Activated CD8-positive, alpha-beta T cell treated with anti-CD3 and anti-CD28 coated beads, Interleukin-2, amount 10 ng/mL, durations not matched to agents 7 days and 5 days (primary cell): ENCODE measurements at regions of chr19 and their contacts with region 1.

Region 1: DNA sequence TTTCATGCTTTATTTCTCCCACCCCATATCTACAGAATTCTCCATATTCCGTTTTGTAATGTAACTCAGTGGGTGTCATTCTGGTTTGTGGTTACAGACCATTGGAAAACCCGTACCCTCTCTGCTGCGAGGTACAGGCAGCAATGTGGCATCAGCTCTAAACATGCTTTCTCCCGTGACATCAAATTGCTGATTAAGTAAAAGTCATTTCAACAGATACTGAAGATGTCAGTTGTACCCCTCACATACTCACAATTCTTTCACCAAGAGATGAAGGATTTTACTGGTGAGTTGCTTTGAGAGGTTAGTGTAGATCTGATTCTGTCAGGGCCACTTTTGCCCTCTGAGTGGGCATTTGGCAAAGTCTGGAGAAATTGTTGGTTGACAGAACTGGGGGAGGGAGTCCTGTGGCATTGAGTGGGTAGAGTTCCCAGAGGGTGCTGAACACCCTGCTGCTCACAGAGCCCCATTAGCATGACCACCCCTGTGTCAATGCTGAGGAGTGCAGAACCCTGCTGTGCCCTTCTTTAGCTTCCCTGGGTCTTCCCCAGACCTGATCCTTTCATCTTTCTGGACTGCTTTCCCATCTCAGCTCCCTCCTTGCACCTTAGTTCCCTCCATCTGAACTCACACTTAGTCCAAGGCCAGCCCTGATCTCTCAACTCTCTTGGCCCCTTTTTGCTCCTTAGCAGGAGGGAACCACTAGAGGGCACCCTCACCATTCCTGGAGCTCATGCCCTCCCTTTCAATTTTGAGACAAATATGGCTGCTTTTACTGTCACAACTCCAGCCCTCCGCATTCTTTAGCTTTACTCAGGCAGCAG is 39.9 kb upstream of the CEACAM8 start:
- DNase-seq: peak; percentile 58
- ATAC-seq: peak; percentile 61
- H3K4me3 Mint-ChIP-seq: no peak overlapping the region
- H3K27ac Mint-ChIP-seq: no peak overlapping the region
- H3K4me1 Mint-ChIP-seq: no peaks in the 10 kb centered on the region
- H3K27me3 Mint-ChIP-seq: peaks cover 5% of the 10 kb centered on the region

Region 2: GRCh38 chr19:42480335-42481095 is 154.1 kb before region 1 on chr19:
- CTCF ChIA-PET with region 1: no interaction called
- POLR2A ChIA-PET with region 1: no interaction called
- DNase-seq: peak; percentile 50
- ATAC-seq: peak; percentile 58
- H3K4me3 Mint-ChIP-seq: peak overlapping the region; percentile 48
- H3K27ac Mint-ChIP-seq: peak overlapping the region; percentile 75
- H3K4me1 Mint-ChIP-seq: peaks cover 48% of the 10 kb centered on the region
- H3K27me3 Mint-ChIP-seq: no peaks in the 10 kb centered on the region

Region 3: DNA sequence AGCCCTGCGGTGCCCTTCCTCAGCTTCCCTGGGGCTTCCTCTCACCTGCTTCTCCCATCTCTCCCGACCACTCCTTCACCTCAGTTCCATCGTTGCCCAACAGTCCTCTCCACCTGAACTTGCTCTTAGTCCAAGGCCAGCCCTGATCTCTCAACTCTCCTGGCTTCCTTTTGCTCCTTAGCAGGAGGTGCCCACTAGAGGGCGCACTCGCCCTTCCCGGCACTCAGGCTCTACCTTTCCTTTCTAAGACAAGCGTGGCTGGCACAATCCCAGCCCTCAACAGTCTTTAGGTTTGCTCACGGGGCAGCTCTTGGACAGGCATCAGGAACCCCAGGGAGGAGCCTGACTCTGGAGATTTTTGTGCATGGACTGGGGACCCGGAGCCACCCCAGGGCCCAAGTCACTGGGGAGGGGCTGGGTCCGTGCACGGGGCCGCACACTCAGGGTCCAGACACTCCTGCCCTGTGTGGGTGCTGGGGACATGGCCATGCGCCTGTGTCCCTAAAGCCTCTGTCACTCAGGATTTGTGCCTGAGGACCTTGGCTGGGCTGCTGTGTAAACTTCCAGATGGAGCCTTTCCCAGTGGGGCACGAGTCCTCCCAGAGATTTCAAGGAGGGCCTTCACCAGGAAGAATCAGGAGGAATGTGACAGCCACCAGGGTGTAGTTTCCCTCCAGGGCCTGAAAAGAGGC is 27.8 kb before region 1 on chr19:
- CTCF ChIA-PET with region 1: interaction called, 13 read pairs
- POLR2A ChIA-PET with region 1: no interaction called
- DNase-seq: peak; percentile 66
- ATAC-seq: peak; percentile 75
- H3K4me3 Mint-ChIP-seq: no peak overlapping the region
- H3K27ac Mint-ChIP-seq: no peak overlapping the region
- H3K4me1 Mint-ChIP-seq: no peaks in the 10 kb centered on the region
- H3K27me3 Mint-ChIP-seq: peaks cover 4% of the 10 kb centered on the region